ENCODE measurements at regions of chr7 and their contacts with region 1.

Region 1: DNA sequence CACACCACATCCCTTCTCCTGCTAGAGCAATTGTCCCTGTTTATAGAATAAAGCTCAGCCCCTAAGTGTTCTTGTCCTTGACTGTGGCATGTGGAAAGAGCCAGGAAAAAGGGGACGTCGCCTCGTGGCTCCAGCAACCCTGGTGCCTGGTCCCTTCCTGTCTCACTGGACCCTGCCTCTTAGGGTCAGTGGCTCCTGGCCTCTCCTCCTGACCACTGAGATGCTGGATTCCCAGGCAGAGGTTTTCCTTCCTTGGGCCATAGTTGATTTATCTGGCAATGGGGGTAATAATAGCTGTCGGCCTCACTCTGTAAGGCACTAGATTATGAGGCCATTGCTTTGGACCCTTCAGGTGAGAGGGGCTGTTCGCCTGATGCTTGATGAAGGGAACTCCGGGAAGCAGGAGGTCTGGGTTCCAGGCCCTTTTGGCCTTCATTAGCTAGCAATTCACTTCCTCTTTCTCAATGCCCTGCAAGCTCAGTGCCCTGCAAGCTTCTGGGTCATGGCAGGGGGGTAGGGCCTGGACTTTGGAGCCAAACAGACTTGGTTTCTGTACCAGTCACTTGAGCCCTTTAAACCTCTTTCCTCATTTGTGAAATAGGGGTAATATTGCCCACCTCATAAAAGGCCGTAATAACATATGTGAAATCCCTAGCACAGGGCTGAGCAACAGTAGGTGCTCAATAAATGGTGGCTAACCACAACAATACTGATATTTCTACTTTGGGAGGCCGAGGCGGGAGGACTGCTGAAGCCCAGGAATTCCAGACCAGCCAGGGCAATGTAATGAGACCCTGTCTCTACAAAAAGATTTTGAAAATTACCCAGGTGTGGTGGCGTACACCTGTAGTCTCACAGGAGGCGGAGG is 1.1 kb downstream of the ASL start:
- DNase-seq: no peak
- H3K4me3 Mint-ChIP-seq: peak overlapping the region; percentile 75
- H3K27ac Mint-ChIP-seq: peak overlapping the region; percentile 34
- H3K4me1 Mint-ChIP-seq: peaks cover 20% of the 10 kb centered on the region
- H3K27me3 Mint-ChIP-seq: peaks cover under 1% of the 10 kb centered on the region

Region 2: GRCh38 chr7:66493235-66494181 is 416.8 kb after region 1 on chr7:
- CTCF ChIA-PET with region 1: no interaction called
- POLR2A ChIA-PET with region 1: interaction called, 10 read pairs
- DNase-seq: peak; percentile 97
- H3K4me3 Mint-ChIP-seq: peak overlapping the region; percentile 81
- H3K27ac Mint-ChIP-seq: peak overlapping the region; percentile 96
- H3K4me1 Mint-ChIP-seq: peaks cover 20% of the 10 kb centered on the region
- H3K27me3 Mint-ChIP-seq: no peaks in the 10 kb centered on the region